ENCODE measurements at regions of chr16 and their contacts with region 1.

Region 1: DNA sequence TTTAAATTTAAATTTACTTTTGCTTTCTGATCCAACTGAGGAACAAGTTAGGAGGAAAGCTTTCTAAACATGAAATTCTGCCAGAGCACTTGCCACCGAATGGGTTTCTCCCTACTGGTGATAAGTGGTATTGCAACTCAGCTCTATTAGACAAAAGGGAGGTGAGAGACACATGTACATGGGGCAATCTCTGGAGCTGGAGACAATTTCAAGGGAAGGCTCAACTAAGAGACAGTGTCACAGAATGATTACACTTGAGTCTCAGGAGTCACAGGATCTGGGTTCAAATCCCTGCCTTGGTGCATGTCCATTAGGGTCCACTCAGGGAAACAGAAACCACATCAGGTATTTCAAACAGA is 37.4 kb downstream of the SOCS1 start:
- DNase-seq: no peak
- H3K4me3 Mint-ChIP-seq: no peak overlapping the region
- H3K27ac Mint-ChIP-seq: peak overlapping the region; percentile 58
- H3K4me1 Mint-ChIP-seq: peaks cover 45% of the 10 kb centered on the region
- H3K27me3 Mint-ChIP-seq: no peaks in the 10 kb centered on the region

Region 2: DNA sequence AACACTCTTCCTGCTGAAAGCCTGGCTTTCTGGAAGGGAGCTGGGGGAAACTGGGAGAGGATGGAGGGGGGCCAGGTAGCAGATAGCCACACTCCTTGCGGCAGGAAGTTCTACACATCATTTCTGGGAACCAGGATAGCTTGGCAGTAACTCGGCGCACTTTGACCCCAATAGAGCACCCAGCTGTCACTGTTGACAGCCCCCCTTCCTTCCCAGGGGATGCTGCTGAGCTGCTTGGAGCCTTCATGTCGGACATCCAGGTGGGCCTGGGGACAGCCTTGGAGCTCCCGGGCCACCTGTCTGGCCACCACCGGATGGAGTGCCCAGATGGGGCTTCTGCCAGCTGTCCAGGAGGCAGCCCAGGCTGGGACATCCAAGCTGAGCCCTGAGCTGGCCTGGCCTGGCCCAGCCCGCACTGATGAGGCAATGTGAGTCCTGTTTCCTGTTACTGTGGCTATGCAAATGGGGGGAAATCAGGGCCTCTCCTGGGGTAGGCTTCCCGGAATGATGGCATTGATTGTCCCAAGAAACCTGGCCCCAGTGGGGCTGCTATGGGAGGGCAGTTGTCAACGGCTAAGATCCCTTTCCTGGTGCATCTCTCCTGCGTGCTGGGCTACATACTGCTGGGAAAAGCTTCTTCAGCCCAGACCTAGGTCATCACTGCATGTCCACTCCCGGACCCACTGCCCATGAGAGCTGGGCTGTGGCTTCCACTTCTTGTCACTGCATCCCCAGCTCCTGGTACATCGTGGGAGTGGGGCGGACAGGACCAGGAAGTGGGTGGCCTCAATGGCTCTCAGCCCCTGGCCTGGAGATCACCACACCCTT is 12.6 kb before region 1 on chr16:
- CTCF ChIA-PET with region 1: interaction called, 19 read pairs
- DNase-seq: no peak
- H3K4me3 Mint-ChIP-seq: no peak overlapping the region
- H3K27ac Mint-ChIP-seq: no peak overlapping the region
- H3K4me1 Mint-ChIP-seq: peaks cover 40% of the 10 kb centered on the region
- H3K27me3 Mint-ChIP-seq: peaks cover 49% of the 10 kb centered on the region

Region 3: GRCh38 chr16:11283820-11284248 is 65.3 kb after region 1 on chr16:
- CTCF ChIA-PET with region 1: no interaction called
- DNase-seq: no peak
- H3K4me3 Mint-ChIP-seq: no peak overlapping the region
- H3K27ac Mint-ChIP-seq: no peak overlapping the region
- H3K4me1 Mint-ChIP-seq: peaks cover 17% of the 10 kb centered on the region
- H3K27me3 Mint-ChIP-seq: peaks cover 65% of the 10 kb centered on the region